Activated CD4-positive, alpha-beta memory T cell treated with anti-CD3 and anti-CD28 coated beads for 36 hours (primary cell): ENCODE measurements at regions of chr2 and their contacts with region 1.

Region 1: GRCh38 chr2:207746131-207746530 is 23.6 kb downstream of the FZD5 start:
- DNase-seq: peak; percentile 56
- H3K4me3 Mint-ChIP-seq: no peak overlapping the region
- H3K27ac Mint-ChIP-seq: no peak overlapping the region
- H3K4me1 Mint-ChIP-seq: no peaks in the 10 kb centered on the region
- H3K27me3 Mint-ChIP-seq: no peaks in the 10 kb centered on the region

Region 2: GRCh38 chr2:207681431-207681830 is 64.7 kb before region 1 on chr2:
- CTCF ChIA-PET with region 1: no interaction called
- POLR2A ChIA-PET with region 1: no interaction called
- intact Hi-C with region 1: no loop called
- DNase-seq: no peak
- H3K4me3 Mint-ChIP-seq: no peak overlapping the region
- H3K27ac Mint-ChIP-seq: no peak overlapping the region
- H3K4me1 Mint-ChIP-seq: peaks cover 10% of the 10 kb centered on the region
- H3K27me3 Mint-ChIP-seq: peaks cover 14% of the 10 kb centered on the region

Region 3: GRCh38 chr2:207764096-207764630 is 18.0 kb after region 1 on chr2:
- CTCF ChIA-PET with region 1: interaction called, 10 read pairs
- POLR2A ChIA-PET with region 1: no interaction called
- intact Hi-C with region 1: no loop called
- DNase-seq: no peak
- H3K4me3 Mint-ChIP-seq: no peak overlapping the region
- H3K27ac Mint-ChIP-seq: no peak overlapping the region
- H3K4me1 Mint-ChIP-seq: peaks cover 23% of the 10 kb centered on the region
- H3K27me3 Mint-ChIP-seq: peaks cover 26% of the 10 kb centered on the region

Region 4: GRCh38 chr2:207974216-207974605 is 228.1 kb after region 1 on chr2:
- CTCF ChIA-PET with region 1: interaction called, 20 read pairs
- POLR2A ChIA-PET with region 1: no interaction called
- intact Hi-C with region 1: loop called (anchors 2 kb)
- DNase-seq: no peak
- H3K4me3 Mint-ChIP-seq: no peak overlapping the region
- H3K27ac Mint-ChIP-seq: no peak overlapping the region
- H3K4me1 Mint-ChIP-seq: peaks cover 9% of the 10 kb centered on the region
- H3K27me3 Mint-ChIP-seq: no peaks in the 10 kb centered on the region

Region 5: DNA sequence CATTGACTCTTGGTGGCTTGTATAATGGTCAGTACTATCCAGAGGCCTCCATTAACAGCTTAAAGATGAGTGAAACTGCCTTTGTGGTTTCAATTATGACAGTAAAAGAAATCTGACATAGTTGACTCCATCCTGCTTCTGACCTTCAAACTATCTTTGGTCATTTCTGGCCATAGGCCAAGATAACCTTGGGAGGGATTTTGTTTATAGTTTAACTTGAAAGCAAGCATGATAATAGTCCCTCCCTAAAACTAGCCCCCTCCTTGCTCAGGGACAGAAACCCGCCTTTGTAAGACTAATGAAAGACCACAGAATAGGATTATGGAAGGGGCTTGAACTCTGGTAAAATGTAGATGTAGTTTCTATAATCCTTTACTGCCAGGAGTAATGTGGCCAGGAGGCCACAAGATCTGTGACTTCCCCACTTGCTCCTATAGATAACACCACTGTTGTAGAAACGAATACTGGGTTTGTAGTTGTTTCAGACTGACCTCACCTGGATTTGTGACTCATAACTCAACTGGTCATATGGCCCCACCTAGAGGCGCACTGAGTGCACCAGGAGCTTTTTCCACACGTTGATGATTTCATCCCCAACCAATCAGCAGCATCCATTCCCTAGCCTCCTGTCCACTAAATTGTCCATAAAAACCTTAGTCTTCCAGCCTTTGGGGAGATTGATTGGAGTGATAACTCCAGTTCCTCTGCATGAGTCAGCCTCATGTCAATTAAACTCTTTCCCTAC is 287.8 kb after region 1 on chr2:
- CTCF ChIA-PET with region 1: interaction called, 93 read pairs
- POLR2A ChIA-PET with region 1: interaction called, 3 read pairs
- intact Hi-C with region 1: loop called (anchors 1 kb)
- DNase-seq: peak; percentile 64
- H3K4me3 Mint-ChIP-seq: no peak overlapping the region
- H3K27ac Mint-ChIP-seq: no peak overlapping the region
- H3K4me1 Mint-ChIP-seq: no peaks in the 10 kb centered on the region
- H3K27me3 Mint-ChIP-seq: no peaks in the 10 kb centered on the region

Region 6: DNA sequence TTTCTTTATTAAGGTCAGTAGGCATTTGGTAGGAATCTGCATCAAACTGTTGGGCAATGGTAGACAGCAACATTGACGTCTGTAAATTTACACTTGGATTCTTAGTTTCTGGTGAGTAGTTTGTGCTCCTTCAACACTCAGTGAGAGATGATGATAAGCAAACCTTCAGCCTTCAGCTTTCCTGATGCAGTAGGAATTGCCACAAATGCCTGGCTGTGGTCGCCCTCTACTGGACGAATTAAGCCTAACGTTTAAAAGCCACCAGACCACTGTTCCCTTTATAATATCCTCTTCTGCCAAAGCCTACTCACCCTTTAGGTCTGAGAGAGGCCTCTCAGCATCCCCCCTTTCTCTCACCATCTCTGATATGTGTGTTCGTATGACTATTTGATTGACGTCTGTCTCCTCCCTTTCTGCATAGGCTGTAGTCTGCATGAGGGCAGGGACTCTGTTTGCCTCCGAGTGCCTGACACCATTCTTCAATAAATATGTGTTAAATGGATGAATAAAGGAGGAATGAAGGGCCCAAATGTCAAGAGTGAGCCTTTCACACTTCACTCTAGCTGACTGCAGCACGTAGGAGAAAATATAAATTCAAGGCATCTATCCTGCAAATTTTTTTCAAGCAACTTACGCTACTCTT is 326.2 kb after region 1 on chr2:
- CTCF ChIA-PET with region 1: interaction called, 44 read pairs
- POLR2A ChIA-PET with region 1: no interaction called
- intact Hi-C with region 1: loop called (anchors 10 kb)
- DNase-seq: peak; percentile 65
- H3K4me3 Mint-ChIP-seq: no peak overlapping the region
- H3K27ac Mint-ChIP-seq: no peak overlapping the region
- H3K4me1 Mint-ChIP-seq: no peaks in the 10 kb centered on the region
- H3K27me3 Mint-ChIP-seq: peaks cover 14% of the 10 kb centered on the region